B cell (primary cell): ENCODE measurements at regions of chr7 and their contacts with region 1.

Region 1: DNA sequence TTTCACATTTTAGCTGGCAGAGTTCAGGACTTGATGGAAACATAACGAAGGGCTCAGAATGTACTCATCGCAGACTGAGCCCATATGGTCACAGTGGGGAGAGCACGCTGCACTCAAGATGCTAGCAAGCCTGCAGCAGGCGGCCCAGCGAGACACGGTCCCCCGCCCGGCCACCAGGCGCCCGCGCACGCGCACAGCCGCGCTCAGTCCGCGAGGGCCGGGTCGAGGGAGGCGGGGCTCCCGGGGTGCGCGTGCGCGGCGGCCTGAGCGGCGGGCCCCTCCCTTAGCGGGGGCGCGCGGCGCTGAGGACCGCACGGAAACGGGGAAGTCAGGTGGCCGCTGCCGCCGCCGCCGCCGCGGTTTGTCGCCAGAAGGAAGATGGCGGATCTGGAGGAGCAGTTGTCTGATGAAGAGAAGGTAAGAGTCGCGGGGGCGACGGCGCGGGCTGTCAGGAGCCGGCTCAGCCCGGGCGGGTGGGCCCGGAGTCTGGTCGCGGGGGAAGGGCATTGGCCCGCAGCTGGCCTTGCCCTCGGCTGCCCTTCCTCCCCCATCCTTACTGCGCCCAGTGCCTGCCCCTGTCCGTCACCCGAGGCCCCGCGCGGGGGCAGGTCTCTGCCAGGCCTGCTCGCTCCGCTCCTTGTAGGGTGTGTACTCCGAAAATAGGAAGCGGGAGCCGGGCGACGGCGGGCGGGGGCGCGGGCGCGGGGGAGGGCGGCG is at the start of gene CAPZA2:
- DNase-seq: peak; percentile 96
- ATAC-seq: peak; percentile 86
- H3K4me3 ChIP-seq: peak within 1 kb of the TSS; percentile 63 to 93 (median 87)
- H3K4me3 Mint-ChIP-seq: peak within 1 kb of the TSS; percentile 92
- H3K27ac ChIP-seq: peak within 1 kb of the TSS; percentile 80 to 90
- H3K27ac Mint-ChIP-seq: peak within 1 kb of the TSS; percentile 92
- H3K4me1 ChIP-seq: peaks cover 17 to 19% of the 10 kb centered on the region in 2 donors
- H3K4me1 Mint-ChIP-seq: peaks cover 38% of the 10 kb centered on the region
- H3K27me3 ChIP-seq: no peaks in the 10 kb centered on the region
- H3K27me3 Mint-ChIP-seq: peaks cover 18% of the 10 kb centered on the region
- CTCF ChIP-seq: peak; percentile 58
- total RNA-seq, gene CAPZA2: 79.0 and 93.7 TPM in 2 replicates

Region 2: DNA sequence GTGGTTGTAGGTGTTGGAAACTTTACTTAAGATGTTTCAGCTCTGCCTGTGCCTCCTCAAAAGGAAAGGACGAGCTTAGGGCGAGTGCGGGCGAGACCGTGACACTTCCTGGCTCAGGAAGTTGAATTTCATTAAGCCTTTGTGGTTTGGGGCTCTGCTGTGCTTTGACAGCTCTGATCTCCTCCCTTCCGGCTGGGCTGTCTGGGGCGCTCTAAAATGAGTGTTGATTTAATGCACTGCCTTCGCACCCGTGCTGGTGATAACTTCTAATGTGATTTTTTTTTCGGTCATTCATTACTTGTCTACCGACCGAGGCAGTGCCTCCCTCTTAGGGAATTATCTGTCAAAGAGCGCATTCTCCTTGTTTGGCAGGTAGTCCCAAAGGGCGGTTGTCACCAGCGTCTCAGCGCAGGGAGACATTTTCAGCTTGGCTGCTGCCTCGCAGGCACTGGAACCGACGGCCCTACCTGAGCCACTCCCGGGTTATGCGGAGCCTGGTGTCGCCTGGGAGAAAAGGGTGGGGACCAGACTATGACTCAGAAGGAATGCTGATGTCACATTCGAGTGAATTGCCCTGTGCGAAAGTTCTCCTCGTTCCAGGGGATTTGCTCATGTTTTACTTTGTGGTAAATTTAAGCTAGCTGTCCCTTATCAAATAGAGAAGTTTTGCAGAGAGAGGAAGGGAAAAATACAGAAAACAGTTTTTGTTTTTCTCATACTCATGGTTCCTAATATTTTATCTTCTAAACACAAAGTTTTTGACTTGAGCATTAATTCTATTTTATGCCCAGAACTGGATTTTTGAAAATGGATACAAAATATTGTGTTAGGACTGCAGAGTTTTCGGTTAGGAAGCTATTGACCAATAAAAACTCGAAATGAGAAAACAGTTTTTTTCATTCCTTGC is 651.1 kb before region 1 on chr7:
- CTCF ChIA-PET with region 1: no interaction called
- POLR2A ChIA-PET with region 1: no interaction called
- intact Hi-C with region 1: loop called (anchors 1 kb)
- DNase-seq: peak; percentile 79
- ATAC-seq: peak; percentile 58
- H3K4me3 ChIP-seq: peak overlapping the region; percentile 70 to 97 (median 85)
- H3K4me3 Mint-ChIP-seq: peak overlapping the region; percentile 99
- H3K27ac ChIP-seq: peak overlapping the region; percentile 82 to 89
- H3K27ac Mint-ChIP-seq: peak overlapping the region; percentile 99
- H3K4me1 ChIP-seq: peaks cover 37 to 40% of the 10 kb centered on the region in 2 donors
- H3K4me1 Mint-ChIP-seq: peaks cover 51% of the 10 kb centered on the region
- H3K27me3 ChIP-seq: no peaks in the 10 kb centered on the region
- H3K27me3 Mint-ChIP-seq: no peaks in the 10 kb centered on the region
- CTCF ChIP-seq: no peak

Region 3: GRCh38 chr7:116582806-116583444 is 279.5 kb before region 1 on chr7:
- CTCF ChIA-PET with region 1: interaction called, 3 read pairs
- POLR2A ChIA-PET with region 1: no interaction called
- intact Hi-C with region 1: loop called (anchors 1 kb)
- DNase-seq: no peak
- ATAC-seq: no peak
- H3K4me3 ChIP-seq: peak overlapping the region in 2 of 5 experiments; percentile 9 to 36
- H3K4me3 Mint-ChIP-seq: peak overlapping the region; percentile 72
- H3K27ac ChIP-seq: peak overlapping the region in 1 of 2 donors; percentile 32
- H3K27ac Mint-ChIP-seq: peak overlapping the region; percentile 18
- H3K4me1 ChIP-seq: peaks cover 13 to 16% of the 10 kb centered on the region in 2 donors
- H3K4me1 Mint-ChIP-seq: peaks cover 16% of the 10 kb centered on the region
- H3K27me3 ChIP-seq: no peaks in the 10 kb centered on the region
- H3K27me3 Mint-ChIP-seq: no peaks in the 10 kb centered on the region
- CTCF ChIP-seq: no peak

Region 4: DNA sequence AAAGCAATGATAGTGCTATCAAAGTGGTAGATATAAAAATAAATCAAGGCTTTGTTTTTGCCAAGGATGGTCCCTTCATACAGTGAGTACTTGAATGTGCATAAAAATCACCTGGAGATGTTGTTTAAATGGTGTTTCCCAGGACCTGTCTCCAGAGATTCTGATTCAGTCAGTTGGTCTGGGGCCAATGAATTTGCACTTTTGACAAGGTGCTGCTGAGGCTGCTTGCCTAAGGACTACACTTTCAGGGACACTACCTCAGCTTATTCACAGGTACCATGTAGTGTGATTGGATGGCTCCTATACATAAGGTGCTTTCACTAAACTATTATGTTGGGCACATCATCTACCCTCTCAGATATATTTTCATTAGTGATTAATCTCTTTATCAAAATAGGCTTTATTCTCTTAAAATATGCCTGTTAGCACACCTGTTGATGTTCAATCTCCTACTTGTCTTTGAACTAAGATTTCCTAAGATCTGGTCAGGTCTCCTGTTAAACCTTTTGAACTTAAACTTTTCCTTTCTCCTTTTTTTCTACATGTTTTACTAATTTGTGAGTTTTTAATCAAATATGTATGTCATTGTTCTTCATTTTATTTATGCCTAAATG is 24.3 kb after region 1 on chr7:
- CTCF ChIA-PET with region 1: no interaction called
- POLR2A ChIA-PET with region 1: no interaction called
- intact Hi-C with region 1: no loop called
- DNase-seq: no peak
- ATAC-seq: no peak
- H3K4me3 ChIP-seq: no peak overlapping the region
- H3K4me3 Mint-ChIP-seq: no peak overlapping the region
- H3K27ac ChIP-seq: no peak overlapping the region
- H3K27ac Mint-ChIP-seq: no peak overlapping the region
- H3K4me1 ChIP-seq: peaks cover 0 to 4% of the 10 kb centered on the region in 2 donors
- H3K4me1 Mint-ChIP-seq: peaks cover 21% of the 10 kb centered on the region
- H3K27me3 ChIP-seq: no peaks in the 10 kb centered on the region
- H3K27me3 Mint-ChIP-seq: no peaks in the 10 kb centered on the region
- CTCF ChIP-seq: no peak

Region 5: GRCh38 chr7:116933465-116933864 is 71.1 kb after region 1 on chr7:
- CTCF ChIA-PET with region 1: no interaction called
- POLR2A ChIA-PET with region 1: no interaction called
- intact Hi-C with region 1: no loop called
- DNase-seq: no peak
- ATAC-seq: no peak
- H3K4me3 ChIP-seq: no peak overlapping the region
- H3K4me3 Mint-ChIP-seq: no peak overlapping the region
- H3K27ac ChIP-seq: no peak overlapping the region
- H3K27ac Mint-ChIP-seq: no peak overlapping the region
- H3K4me1 ChIP-seq: peaks cover 3 to 4% of the 10 kb centered on the region in 2 donors
- H3K4me1 Mint-ChIP-seq: peaks cover 6% of the 10 kb centered on the region
- H3K27me3 ChIP-seq: peaks cover 0 to 9% (median 0%) of the 10 kb centered on the region in 4 experiments
- H3K27me3 Mint-ChIP-seq: peaks cover 24% of the 10 kb centered on the region
- CTCF ChIP-seq: no peak

Region 6: DNA sequence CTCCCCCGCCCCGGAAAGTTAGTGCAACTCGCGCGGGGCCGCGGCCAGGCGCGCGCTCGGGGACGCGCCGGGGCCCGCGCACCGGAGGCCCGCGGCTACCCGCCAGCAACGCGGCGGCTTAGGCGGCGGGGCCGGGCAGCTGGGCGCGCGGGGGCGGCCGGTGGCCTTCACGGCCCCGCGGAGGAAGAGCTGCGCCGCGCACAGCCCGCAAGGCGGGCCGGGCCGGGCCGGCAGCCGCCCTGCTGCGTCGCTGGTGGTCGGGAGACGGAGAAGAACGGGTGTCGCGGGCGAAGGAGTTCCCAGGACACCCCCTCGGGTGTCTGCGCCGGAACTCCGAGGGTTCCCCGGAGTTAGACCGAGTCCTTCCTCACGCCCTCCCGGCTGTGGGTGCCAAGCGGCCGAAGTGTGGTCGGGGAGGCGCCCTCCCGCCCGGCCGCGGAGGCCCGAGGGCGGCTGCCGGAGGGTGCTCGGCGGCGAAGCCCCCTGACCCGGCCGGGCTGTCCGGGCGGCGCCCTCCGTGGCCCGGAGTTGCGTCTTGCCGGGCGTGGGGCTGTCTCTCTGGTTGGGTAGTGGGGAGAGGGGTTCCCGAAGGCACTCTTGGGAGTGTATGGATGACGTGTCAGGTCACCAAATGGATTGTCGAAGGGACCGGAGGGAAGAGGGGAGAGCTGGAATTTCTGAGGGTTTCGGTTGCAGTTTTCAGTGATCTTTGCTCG is 91.5 kb after region 1 on chr7:
- CTCF ChIA-PET with region 1: no interaction called
- POLR2A ChIA-PET with region 1: no interaction called
- intact Hi-C with region 1: loop called (anchors 1 kb)
- DNase-seq: no peak
- ATAC-seq: peak; percentile 70
- H3K4me3 ChIP-seq: peak overlapping the region; percentile 56 to 80 (median 71)
- H3K4me3 Mint-ChIP-seq: peak overlapping the region; percentile 97
- H3K27ac ChIP-seq: peak overlapping the region; percentile 33 to 43
- H3K27ac Mint-ChIP-seq: peak overlapping the region; percentile 93
- H3K4me1 ChIP-seq: peaks cover 12 to 13% of the 10 kb centered on the region in 2 donors
- H3K4me1 Mint-ChIP-seq: peaks cover 20% of the 10 kb centered on the region
- H3K27me3 ChIP-seq: peaks cover 0 to 19% (median 2%) of the 10 kb centered on the region in 4 experiments
- H3K27me3 Mint-ChIP-seq: peaks cover 3% of the 10 kb centered on the region
- CTCF ChIP-seq: no peak

Region 7: DNA sequence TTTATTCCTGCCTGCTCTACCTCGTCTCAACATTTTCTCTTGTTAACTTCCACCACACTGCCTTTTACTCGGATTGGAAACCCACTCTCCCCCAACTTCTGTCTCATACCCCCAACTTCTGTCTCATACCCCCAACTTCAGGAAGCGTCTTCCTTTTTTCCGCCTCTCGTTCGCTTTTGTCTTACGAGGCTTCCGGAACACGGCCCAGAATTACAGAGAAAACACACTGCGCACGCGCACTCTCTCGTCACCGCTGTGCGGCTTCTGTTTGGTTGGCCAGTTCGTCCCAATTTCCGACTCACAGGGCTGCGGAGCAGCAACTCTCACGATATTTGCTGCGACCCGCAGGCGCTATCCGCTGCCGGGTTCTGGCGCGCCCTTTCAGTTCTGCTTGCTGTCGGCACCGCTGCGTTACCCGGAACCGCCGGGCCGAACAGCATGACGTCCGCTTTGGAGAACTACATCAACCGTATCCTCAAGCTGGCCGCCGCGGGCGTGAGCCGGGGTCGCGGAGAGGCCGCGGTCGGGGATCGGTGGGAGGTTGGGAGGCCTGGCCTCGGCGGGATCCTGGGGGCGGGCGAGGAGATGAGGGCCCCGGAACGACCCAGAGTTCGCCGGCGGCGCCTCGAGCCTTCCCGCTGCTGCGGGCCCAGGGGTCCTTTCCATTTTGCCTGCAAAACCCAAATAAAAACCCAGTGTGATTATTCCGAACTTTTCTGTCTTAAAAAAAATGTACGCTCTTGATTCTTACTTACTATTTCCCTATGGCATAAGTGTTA is 1321.6 kb after region 1 on chr7 and contains the start of gene LSM8:
- CTCF ChIA-PET with region 1: no interaction called
- POLR2A ChIA-PET with region 1: no interaction called
- intact Hi-C with region 1: loop called (anchors 2 kb)
- DNase-seq: peak; percentile 99
- ATAC-seq: peak; percentile 97
- H3K4me3 ChIP-seq: peak within 1 kb of the TSS; percentile 84 to 99 (median 88)
- H3K4me3 Mint-ChIP-seq: peak within 1 kb of the TSS; percentile 94
- H3K27ac ChIP-seq: peak within 1 kb of the TSS; percentile 96 to 98
- H3K27ac Mint-ChIP-seq: peak within 1 kb of the TSS; percentile 98
- H3K4me1 ChIP-seq: peaks cover 25 to 29% of the 10 kb centered on the region in 2 donors
- H3K4me1 Mint-ChIP-seq: peaks cover 50% of the 10 kb centered on the region
- H3K27me3 ChIP-seq: no peaks in the 10 kb centered on the region
- H3K27me3 Mint-ChIP-seq: no peaks in the 10 kb centered on the region
- CTCF ChIP-seq: no peak
- total RNA-seq, gene LSM8: 64.3 TPM in 2 replicates